ENCODE measurements at regions of chr16 and their contacts with region 1.

Region 1: DNA sequence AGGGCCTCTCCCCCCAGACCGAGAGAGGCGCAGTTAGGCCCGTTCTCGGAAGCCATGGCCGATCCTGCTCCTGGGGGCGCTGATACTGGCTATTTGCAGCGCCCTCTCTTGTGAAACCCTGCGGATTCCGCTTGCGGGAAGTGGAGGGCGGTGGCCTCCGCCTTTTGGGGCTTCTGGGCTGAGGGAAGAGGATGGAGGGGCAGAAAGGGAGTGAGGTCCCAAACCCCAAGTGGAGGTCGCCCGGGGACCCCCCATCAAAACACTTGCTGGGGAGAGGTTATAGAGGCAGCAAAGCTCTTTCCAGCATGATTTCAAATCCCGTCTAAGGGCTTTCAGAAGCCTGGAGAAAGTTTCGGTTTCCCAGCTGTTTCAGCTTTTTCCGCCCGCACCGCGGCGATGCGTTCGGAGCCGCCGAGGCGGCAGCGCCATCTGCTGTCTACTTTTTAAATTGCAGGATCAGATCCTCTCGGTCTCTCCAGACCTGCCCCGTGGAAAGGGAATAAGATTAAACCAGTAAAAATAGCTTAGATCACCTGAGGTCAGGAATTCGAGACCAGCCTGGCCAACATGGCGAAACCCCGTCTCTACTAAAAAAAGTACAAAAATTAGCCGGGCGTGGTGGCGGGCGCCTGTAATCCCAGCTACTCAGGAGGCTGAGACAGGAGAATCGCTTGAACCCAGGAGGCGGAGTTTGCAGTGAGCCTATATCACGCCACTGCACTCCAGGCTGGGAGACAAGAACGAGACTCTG is 15.8 kb downstream of the SNX20 start:
- DNase-seq: no peak
- H3K4me3 ChIP-seq: peak overlapping the region; percentile 58
- CTCF ChIP-seq: peak; percentile 69

Region 2: DNA sequence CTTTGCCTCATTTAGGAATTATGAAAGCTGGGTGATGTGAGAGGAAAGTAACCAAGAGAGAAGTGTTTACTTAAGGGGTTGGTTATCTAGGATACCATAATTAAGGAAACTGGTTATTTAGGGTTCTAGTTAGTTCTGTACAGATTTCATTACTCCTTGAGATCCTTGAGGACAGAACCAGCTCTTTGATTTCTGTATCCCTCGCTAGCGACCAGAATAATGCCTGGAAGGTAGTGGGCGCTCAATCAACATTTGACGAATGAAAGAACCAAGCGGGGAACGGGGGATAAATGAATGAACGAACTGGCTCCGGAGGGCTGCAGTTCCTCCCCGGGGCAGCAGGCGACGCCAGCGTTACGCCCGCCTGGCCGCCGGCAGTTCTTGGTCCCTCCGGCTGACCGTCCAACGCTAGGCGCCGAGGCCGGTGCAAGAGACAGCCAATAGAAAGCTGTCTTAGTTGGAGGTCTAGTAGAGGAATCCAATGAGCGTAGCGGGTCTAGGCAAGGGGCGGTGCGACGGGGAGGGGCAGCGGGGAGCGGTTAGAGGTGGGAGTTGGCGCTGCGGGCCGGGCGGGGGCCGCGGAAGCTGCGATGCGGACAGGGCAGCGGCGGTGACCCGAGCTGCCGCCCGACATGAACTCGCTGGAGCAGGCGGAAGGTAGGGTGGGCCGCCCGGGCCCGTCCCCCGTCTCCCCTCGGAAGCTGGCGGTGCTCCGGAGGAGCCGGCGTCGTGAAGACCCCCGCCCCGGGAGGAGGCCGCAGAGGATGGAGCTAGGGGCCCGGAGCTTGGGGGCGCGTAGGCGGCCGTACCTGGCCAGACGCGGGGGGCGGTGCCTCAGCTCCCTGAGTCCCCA is 640.4 kb before region 1 on chr16 and contains the start of gene CNEP1R1:
- CTCF ChIA-PET with region 1: interaction called, 21 read pairs
- POLR2A ChIA-PET with region 1: interaction called, 3 read pairs
- DNase-seq: peak; percentile 77
- H3K4me3 ChIP-seq: peak within 1 kb of the TSS; percentile 86
- CTCF ChIP-seq: peak; percentile 100

Region 3: DNA sequence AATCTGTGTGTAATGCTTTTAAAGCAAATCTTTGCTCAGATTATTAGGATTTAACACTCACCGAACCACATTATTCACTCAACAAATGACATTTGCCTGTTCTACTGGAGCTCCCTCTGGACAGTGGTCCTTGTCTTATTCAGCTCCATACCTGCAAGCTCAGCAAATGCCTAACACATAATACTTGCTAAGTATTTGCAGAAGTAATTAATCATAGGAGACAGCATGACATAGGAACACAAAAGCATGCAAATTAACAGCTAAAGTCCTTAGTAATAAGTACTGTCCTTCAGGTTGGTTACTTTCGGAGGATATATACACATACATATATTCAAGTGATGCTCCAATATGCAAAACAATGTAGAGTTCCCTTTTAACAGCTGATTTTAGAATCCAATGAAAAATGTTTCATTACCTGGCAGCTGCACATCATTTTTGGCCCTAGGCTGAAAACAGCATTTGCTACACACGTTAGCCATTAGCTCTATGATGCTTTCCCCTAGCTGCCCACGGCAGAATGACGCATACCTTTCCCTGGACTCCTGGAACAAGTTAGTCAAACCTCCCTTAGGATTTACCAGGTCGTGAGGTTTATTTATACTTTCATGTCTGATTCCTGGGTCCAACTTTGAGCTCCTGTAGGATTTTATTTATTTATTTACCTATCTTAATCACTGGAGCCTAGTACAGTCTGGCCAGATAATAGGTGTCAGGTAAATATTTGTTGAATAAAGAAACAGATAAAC is 305.1 kb before region 1 on chr16:
- CTCF ChIA-PET with region 1: interaction called, 10 read pairs
- POLR2A ChIA-PET with region 1: no interaction called
- DNase-seq: no peak
- H3K4me3 ChIP-seq: no peak overlapping the region
- CTCF ChIP-seq: no peak

Region 4: DNA sequence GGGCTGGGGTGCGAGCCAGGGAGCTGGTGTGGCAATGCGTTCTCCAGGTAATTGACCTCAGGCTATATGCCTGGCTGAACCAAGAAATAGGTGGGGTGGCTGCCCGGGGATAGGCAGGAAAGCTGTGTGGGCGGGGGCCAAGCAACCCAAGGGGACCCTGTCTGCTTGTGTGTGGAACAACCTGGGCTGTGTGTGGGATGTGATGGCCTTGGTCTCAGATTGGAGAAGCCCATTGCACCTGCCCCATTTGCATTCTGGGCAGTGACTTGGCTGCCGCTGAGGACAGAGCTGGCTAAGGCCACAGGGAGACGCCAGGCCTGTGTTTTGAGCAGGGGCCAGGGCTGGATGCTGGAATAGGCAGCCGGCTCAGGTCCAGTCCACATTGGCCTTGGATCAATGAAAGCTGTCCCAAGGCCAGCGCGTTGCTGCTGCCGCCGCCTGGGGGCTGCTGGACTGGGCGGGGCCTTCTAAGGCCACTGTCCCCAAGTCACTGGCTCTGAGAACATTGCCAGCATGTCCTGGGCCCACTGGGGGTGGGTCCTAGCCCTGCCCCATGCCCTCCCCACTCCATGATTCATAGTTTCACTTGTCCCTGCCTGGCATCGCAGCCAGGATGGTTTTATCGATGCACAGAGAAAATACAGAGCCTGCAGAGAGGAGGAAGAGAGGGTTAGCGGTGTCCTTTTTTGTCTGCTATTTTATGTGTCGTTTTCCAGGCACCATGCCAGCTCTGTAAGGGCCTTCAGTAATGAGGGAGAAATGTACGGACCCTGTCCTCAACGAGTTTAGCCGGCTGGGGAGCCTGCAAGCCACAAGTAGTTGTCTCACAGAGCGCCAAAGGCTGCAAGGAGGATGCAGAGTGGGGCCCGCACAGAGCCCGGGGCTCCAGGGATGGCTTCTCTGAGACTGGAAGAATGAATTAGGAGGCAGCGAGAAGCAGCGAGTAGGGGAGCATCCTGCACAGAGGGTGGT is 73.2 kb before region 1 on chr16:
- CTCF ChIA-PET with region 1: interaction called, 147 read pairs
- POLR2A ChIA-PET with region 1: no interaction called
- DNase-seq: no peak
- H3K4me3 ChIP-seq: no peak overlapping the region
- CTCF ChIP-seq: no peak

Region 5: GRCh38 chr16:50635505-50636392 is 29.6 kb before region 1 on chr16:
- CTCF ChIA-PET with region 1: interaction called, 10 read pairs
- POLR2A ChIA-PET with region 1: no interaction called
- DNase-seq: no peak
- H3K4me3 ChIP-seq: no peak overlapping the region
- CTCF ChIP-seq: no peak

Region 6: GRCh38 chr16:50688867-50689266 is 23.6 kb after region 1 on chr16:
- CTCF ChIA-PET with region 1: interaction called, 10 read pairs
- POLR2A ChIA-PET with region 1: no interaction called
- DNase-seq: no peak
- H3K4me3 ChIP-seq: no peak overlapping the region
- CTCF ChIP-seq: no peak

Region 7: DNA sequence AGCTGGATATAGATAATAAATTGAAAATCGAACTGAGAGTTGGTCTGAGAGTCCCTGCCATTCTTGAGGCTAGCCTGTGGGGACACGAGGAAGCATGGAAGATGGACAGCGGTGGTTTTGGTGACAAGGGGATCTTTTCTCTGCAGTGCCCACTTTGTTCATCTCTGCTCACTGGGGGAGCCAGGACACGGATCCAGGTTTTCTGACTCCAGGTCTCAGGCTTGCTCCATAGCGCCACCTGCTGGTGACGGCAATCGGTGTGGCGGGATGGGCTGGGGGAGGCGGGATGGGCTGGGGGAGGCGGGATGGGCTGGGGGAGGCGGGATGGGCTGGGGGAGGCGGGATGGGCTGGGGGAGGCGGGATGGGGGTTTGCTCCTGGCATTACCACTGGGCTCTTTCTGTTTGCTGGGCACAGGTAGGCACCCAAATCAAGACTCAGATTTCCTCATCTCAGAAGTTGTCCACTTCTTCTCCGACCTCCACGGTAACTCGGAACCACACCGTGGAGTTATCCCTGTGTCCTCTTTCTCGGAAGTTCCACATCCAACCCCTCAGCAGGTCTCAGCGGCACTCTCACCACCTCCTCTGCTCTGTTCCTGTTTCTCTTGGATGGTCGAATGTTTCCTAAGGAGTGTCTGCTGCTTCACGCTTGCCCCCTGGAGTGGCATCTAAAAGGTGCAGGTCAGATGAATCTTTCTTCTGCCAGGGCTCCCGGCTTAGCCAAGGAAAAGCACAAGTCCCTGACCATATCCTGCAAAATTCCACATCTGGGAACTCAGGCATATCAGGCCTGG is 219.0 kb after region 1 on chr16:
- CTCF ChIA-PET with region 1: no interaction called
- POLR2A ChIA-PET with region 1: no interaction called
- DNase-seq: no peak
- H3K4me3 ChIP-seq: no peak overlapping the region
- CTCF ChIP-seq: peak; percentile 34

Measured in AG04449 (cell line).